ENCODE measurements at regions of chr4 and their contacts with region 1.

Region 1: DNA sequence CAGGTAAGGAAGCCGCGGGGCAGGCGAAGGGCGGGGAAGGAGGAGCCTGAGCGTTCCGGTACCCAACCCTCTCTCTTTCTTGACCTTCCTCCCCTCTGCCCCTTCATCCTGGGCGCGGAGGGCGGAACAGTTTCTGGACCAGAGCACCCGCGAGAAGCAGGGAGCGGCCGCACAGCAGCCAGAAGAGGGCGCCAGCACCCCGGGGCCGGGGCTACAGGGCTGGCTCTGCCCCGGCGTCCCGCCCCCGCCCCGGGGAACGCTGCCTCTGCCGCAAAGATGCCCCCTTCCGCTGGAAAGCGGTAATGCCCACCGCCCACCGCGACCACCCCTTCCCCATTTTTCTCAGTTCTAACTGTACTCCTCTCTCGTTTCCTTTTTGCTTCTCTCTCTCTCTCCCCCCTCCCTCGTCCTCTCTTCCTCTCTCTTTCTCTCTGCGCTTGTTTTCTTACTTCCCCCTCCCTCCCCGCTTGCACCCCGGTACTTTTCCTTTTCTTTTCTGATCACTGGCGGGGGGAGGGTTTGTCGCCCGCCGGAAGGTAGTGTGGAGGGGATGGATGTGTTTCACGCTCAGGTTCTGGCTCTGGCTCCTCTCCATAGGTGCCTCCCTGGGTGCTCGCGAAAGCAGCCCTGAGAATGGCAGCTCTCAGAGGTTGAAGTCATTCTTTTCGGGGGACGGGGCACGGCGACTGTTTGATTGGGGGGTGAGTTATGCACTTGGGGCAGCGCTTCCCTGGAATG is 13.1 kb upstream of the PRDM8 start:
- DNase-seq: no peak
- ATAC-seq: peak; percentile 95
- H3K4me3 ChIP-seq: peak overlapping the region; percentile 78 to 81
- H3K27ac ChIP-seq: peak overlapping the region; percentile 89
- H3K4me1 ChIP-seq: peaks cover 4% of the 10 kb centered on the region; the same call in 1 of the 2 replicates
- H3K27me3 ChIP-seq: no peaks in the 10 kb centered on the region
- CTCF ChIP-seq: peak; percentile 97

Region 2: GRCh38 chr4:80072744-80073472 is 111.3 kb before region 1 on chr4 and contains the start of gene ANTXR2:
- CTCF ChIA-PET with region 1: no interaction called
- POLR2A ChIA-PET with region 1: no interaction called
- in situ Hi-C with region 1: no loop called
- intact Hi-C with region 1: loop called (anchors 5 kb)
- DNase-seq: no peak
- ATAC-seq: peak; percentile 98
- H3K4me3 ChIP-seq: peak within 1 kb of the TSS; percentile 85 to 93
- H3K27ac ChIP-seq: peak within 1 kb of the TSS; percentile 74
- H3K4me1 ChIP-seq: peaks cover 28% of the 10 kb centered on the region
- H3K27me3 ChIP-seq: no peaks in the 10 kb centered on the region
- CTCF ChIP-seq: no peak
- total RNA-seq, gene ANTXR2: 27.8 TPM

Region 3: GRCh38 chr4:80125252-80126177 is 58.7 kb before region 1 on chr4:
- CTCF ChIA-PET with region 1: no interaction called
- POLR2A ChIA-PET with region 1: interaction called, 6 read pairs
- in situ Hi-C with region 1: no loop called
- intact Hi-C with region 1: loop called (anchors 2 kb)
- DNase-seq: no peak
- ATAC-seq: peak; percentile 52; the same call in 1 of the 2 replicates
- H3K4me3 ChIP-seq: no peak overlapping the region
- H3K27ac ChIP-seq: peak overlapping the region; percentile 86
- H3K4me1 ChIP-seq: peaks cover 14% of the 10 kb centered on the region; the same call in 1 of the 2 replicates
- H3K27me3 ChIP-seq: no peaks in the 10 kb centered on the region
- CTCF ChIP-seq: peak; percentile 56

Measured in Panc1 (cell line).